Activated CD4-positive, alpha-beta T cell treated with anti-CD3 and anti-CD28 coated beads for 36 hours (primary cell): ENCODE measurements at regions of chr4 and their contacts with region 1.

Region 1: GRCh38 chr4:74874753-74875367 is 58.1 kb upstream of the PARM1 start:
- DNase-seq: peak; percentile 16
- ATAC-seq: peak; percentile 72
- H3K4me3 Mint-ChIP-seq: no peak overlapping the region
- H3K27ac Mint-ChIP-seq: no peak overlapping the region
- H3K4me1 Mint-ChIP-seq: no peaks in the 10 kb centered on the region
- H3K27me3 Mint-ChIP-seq: peaks cover 11% of the 10 kb centered on the region

Region 2: DNA sequence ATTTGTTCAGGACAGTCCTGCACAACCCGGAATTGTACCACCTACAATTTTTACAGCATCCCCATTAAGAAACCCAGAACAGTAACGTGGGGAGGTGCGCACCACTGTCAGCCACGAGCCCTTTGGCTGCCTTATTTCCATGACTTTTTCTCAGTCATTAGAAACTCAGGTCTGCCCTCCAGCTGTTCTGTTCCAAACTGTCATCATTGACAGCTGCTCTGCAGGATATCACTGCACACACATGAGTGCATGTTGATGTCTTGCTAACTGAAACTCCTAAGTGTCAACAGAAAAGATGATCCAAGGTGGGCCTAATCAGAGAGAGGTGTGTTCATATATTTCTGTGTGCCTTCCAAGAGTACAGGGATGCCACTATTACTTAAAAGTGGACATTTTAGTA is 181.4 kb after region 1 on chr4:
- CTCF ChIA-PET with region 1: interaction called, 4 read pairs
- POLR2A ChIA-PET with region 1: no interaction called
- intact Hi-C with region 1: loop called in 1 of 2 experiments (anchors 10 kb)
- DNase-seq: no peak
- ATAC-seq: no peak
- H3K4me3 Mint-ChIP-seq: no peak overlapping the region
- H3K27ac Mint-ChIP-seq: no peak overlapping the region
- H3K4me1 Mint-ChIP-seq: no peaks in the 10 kb centered on the region
- H3K27me3 Mint-ChIP-seq: no peaks in the 10 kb centered on the region

Region 3: DNA sequence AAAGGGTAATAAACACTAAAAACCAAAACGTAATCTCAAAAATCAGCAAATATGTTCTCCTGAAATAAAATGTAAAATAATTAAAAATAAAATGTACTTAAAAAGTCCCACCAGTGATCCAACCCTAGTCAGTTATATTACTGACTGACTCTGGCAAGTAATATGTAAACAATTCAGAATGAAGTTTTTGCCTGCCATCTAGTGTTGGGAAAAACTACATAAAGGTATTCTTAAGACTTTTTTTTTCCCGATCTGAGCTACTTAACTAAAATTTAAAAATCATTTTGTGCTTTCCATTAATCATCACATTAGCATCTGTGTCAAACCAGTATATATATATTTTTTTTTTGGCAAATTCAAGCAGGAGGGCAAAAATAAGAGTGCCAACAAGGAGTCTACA is 615.3 kb after region 1 on chr4:
- CTCF ChIA-PET with region 1: interaction called, 3 read pairs
- POLR2A ChIA-PET with region 1: no interaction called
- intact Hi-C with region 1: loop called in 1 of 2 experiments (anchors 5 kb)
- DNase-seq: no peak
- ATAC-seq: no peak
- H3K4me3 Mint-ChIP-seq: no peak overlapping the region
- H3K27ac Mint-ChIP-seq: no peak overlapping the region
- H3K4me1 Mint-ChIP-seq: peaks cover 4% of the 10 kb centered on the region
- H3K27me3 Mint-ChIP-seq: no peaks in the 10 kb centered on the region

Region 4: GRCh38 chr4:75849461-75849860 is 974.6 kb after region 1 on chr4:
- CTCF ChIA-PET with region 1: interaction called, 5 read pairs
- POLR2A ChIA-PET with region 1: no interaction called
- intact Hi-C with region 1: loop called in 1 of 2 experiments (anchors 2 kb)
- DNase-seq: peak; percentile 5
- ATAC-seq: peak; percentile 27
- H3K4me3 Mint-ChIP-seq: no peak overlapping the region
- H3K27ac Mint-ChIP-seq: no peak overlapping the region
- H3K4me1 Mint-ChIP-seq: peaks cover 9% of the 10 kb centered on the region
- H3K27me3 Mint-ChIP-seq: peaks cover 7% of the 10 kb centered on the region